Sciatic nerve (tissue), 2 donors: ENCODE measurements at regions of chr12 and their contacts with region 1.

Region 1: DNA sequence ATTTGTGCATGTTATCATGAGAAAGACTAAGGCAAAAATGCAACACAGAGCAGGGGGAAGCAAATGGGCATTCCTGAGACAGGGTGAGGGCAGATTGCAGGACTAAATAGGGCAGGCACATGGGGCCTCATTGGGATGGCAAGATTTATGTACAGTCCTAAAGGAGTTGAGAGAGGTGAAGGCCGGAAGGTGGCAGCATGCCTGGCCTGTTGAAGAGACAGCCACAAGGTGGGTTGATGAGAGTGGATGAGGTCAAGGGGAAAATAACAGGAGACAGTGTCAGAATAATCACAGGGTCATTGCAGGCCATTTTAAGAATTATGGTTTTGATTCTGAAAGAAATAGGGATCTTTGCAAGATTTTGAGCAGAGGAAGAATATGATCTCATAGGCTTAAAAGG is 21.0 kb downstream of the PAH start:
- DNase-seq: no peak
- ATAC-seq: no peak

Region 2: DNA sequence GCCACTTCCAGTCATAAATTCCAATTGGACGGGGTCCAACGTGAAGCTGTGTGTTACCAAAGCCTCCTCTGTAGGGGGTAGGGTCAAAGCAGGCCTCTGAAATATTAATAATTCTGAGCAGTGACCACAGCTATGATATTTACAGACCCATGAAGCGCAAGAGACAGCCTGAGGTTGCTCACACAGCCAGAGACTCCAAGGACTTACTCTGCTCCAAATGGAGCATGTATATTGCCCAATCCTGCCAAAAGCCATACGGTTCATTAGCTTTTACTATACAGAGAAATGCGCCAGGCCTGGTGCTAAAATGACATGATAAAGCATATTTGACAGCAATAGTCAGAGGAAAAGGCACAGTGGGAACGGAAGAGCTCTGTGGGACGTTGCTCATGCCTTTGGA is 130.3 kb before region 1 on chr12:
- intact Hi-C with region 1: no loop called
- DNase-seq: no peak
- ATAC-seq: peak; percentile 20

Region 3: GRCh38 chr12:103392722-103393121 is 496.7 kb after region 1 on chr12:
- intact Hi-C with region 1: loop called (anchors 2 kb)
- DNase-seq: no peak
- ATAC-seq: no peak